Naive thymus-derived CD4-positive, alpha-beta T cell (primary cell): ENCODE measurements at regions of chr11 and their contacts with region 1.

Region 1: GRCh38 chr11:662689-663274 is 25.7 kb downstream of the DRD4 start:
- DNase-seq: peak in 6 of 9 donors; percentile 24 to 48 (median 32)
- ATAC-seq: peak; percentile 86
- H3K4me3 ChIP-seq: no peak overlapping the region
- H3K4me3 Mint-ChIP-seq: no peak overlapping the region
- H3K27ac ChIP-seq: no peak overlapping the region
- H3K27ac Mint-ChIP-seq: peak overlapping the region in 1 of 9 donors; percentile 46
- H3K4me1 ChIP-seq: no peaks in the 10 kb centered on the region
- H3K4me1 Mint-ChIP-seq: peaks cover 0 to 7% (median 2%) of the 10 kb centered on the region in 7 donors
- H3K27me3 ChIP-seq: no peaks in the 10 kb centered on the region
- H3K27me3 Mint-ChIP-seq: no peaks in the 10 kb centered on the region

Region 2: GRCh38 chr11:765025-765801 is 102.4 kb after region 1 on chr11:
- CTCF ChIA-PET with region 1: interaction called, 4 read pairs
- POLR2A ChIA-PET with region 1: no interaction called
- intact Hi-C with region 1: loop called in 1 of 2 experiments (anchors 1 kb)
- DNase-seq: peak; percentile 47 to 74 (median 68)
- ATAC-seq: peak; percentile 92
- H3K4me3 ChIP-seq: no peak overlapping the region
- H3K4me3 Mint-ChIP-seq: no peak overlapping the region
- H3K27ac ChIP-seq: no peak overlapping the region
- H3K27ac Mint-ChIP-seq: peak overlapping the region in 5 of 9 donors; percentile 40 to 85 (median 64)
- H3K4me1 ChIP-seq: no peaks in the 10 kb centered on the region
- H3K4me1 Mint-ChIP-seq: peaks cover 0 to 7% (median 0%) of the 10 kb centered on the region in 7 donors
- H3K27me3 ChIP-seq: no peaks in the 10 kb centered on the region
- H3K27me3 Mint-ChIP-seq: no peaks in the 10 kb centered on the region

Region 3: DNA sequence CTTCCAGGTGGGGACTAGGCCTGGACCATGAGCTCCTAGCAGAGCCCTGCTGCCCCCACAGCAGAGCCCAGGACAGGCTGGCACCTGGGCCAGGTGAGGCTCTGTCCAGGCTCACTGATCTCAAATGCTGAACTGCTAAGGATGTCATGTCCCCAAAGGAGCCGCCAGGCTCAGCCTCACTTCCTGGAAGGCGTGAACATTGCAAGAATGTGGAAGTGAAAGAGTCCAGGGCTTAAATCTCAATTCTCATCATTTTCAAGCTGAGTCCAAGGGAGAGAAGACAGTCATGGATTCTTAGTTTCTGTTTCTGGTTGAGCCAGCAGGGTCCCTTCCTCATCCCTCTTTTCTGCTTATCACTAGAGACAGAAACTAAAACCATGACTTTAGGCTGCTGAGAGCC is 1602.6 kb after region 1 on chr11:
- CTCF ChIA-PET with region 1: no interaction called
- POLR2A ChIA-PET with region 1: no interaction called
- intact Hi-C with region 1: no loop called
- DNase-seq: peak in 1 of 9 donors; percentile 26
- ATAC-seq: peak; percentile 63
- H3K4me3 ChIP-seq: peak overlapping the region; percentile 25
- H3K4me3 Mint-ChIP-seq: peak overlapping the region; percentile 23 to 75 (median 60)
- H3K27ac ChIP-seq: no peak overlapping the region
- H3K27ac Mint-ChIP-seq: peak overlapping the region in 4 of 9 donors; percentile 38 to 80 (median 46)
- H3K4me1 ChIP-seq: peaks cover 18 to 20% of the 10 kb centered on the region in 2 donors
- H3K4me1 Mint-ChIP-seq: peaks cover 15 to 23% (median 21%) of the 10 kb centered on the region in 7 donors
- H3K27me3 ChIP-seq: no peaks in the 10 kb centered on the region
- H3K27me3 Mint-ChIP-seq: peaks cover 0 to 13% (median 8%) of the 10 kb centered on the region in 5 donors